ENCODE measurements at regions of chr7 and their contacts with region 1.

Region 1: DNA sequence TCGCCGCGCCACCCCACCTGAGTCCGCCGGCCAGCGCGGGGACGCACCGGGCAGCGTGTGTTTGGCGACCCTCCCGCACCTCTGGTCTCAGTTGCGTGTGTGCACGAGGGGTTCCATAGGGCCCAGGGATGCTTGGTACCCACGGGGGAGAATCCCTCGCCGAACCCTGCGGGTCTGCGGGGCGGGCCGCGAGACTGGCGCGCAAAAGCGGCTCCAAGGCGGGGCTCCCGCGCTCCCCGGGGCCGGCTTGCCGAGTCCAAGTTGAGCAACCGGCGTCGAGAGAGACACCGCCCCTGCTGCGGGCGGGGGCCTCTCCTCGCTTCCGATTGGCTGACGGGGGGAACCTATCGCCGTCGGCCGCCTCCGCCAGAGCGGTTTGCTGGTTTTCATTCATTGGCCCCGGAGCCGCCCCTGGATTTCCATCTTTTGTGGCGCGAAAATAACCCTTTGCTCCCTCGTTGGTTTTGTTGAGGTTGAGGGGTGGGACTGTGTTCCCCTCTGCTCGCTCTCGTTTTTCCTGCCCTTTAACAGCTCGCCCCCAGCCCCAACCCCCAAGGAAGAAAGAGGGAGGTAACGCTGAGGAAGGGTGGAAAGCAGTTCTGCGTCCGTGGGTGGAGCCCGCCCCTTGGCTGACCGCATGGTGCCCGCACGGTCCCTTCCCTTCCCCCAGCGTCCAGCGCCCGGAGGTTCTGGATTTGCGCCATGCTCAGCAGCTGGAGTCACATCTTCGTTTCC is 4.0 kb upstream of the IGF2BP3 start:
- DNase-seq: peak; percentile 96 to 99
- H3K4me3 ChIP-seq: peak overlapping the region; percentile 73
- H3K27ac ChIP-seq: peak overlapping the region; percentile 92
- H3K4me1 ChIP-seq: peaks cover 39% of the 10 kb centered on the region
- H3K27me3 ChIP-seq: no peaks in the 10 kb centered on the region
- CTCF ChIP-seq: no peak

Region 2: GRCh38 chr7:22822486-22823141 is 651.6 kb before region 1 on chr7 and contains the start of gene TOMM7:
- CTCF ChIA-PET with region 1: no interaction called
- POLR2A ChIA-PET with region 1: no interaction called
- intact Hi-C with region 1: loop called (anchors 10 kb)
- DNase-seq: peak; percentile 90 to 94
- H3K4me3 ChIP-seq: peak within 1 kb of the TSS; percentile 99
- H3K27ac ChIP-seq: peak within 1 kb of the TSS; percentile 33
- H3K4me1 ChIP-seq: peaks cover 29% of the 10 kb centered on the region
- H3K27me3 ChIP-seq: no peaks in the 10 kb centered on the region
- CTCF ChIP-seq: peak; percentile 65
- total RNA-seq, gene TOMM7: 588 and 703 TPM in 2 replicates

Region 3: GRCh38 chr7:23117841-23118240 is 356.4 kb before region 1 on chr7:
- CTCF ChIA-PET with region 1: no interaction called
- POLR2A ChIA-PET with region 1: no interaction called
- intact Hi-C with region 1: no loop called
- DNase-seq: no peak
- H3K4me3 ChIP-seq: no peak overlapping the region
- H3K27ac ChIP-seq: no peak overlapping the region
- H3K4me1 ChIP-seq: no peaks in the 10 kb centered on the region
- H3K27me3 ChIP-seq: no peaks in the 10 kb centered on the region
- CTCF ChIP-seq: no peak

Region 4: GRCh38 chr7:23298885-23299769 is 175.1 kb before region 1 on chr7 and contains the start of gene MALSU1:
- CTCF ChIA-PET with region 1: no interaction called
- POLR2A ChIA-PET with region 1: interaction called, 3 read pairs
- intact Hi-C with region 1: loop called (anchors 1 kb)
- DNase-seq: peak; percentile 95 to 97
- H3K4me3 ChIP-seq: peak within 1 kb of the TSS; percentile 71
- H3K27ac ChIP-seq: peak within 1 kb of the TSS; percentile 85
- H3K4me1 ChIP-seq: peaks cover 27% of the 10 kb centered on the region
- H3K27me3 ChIP-seq: no peaks in the 10 kb centered on the region
- CTCF ChIP-seq: no peak
- total RNA-seq, gene MALSU1: 105 and 133 TPM in 2 replicates

Region 5: DNA sequence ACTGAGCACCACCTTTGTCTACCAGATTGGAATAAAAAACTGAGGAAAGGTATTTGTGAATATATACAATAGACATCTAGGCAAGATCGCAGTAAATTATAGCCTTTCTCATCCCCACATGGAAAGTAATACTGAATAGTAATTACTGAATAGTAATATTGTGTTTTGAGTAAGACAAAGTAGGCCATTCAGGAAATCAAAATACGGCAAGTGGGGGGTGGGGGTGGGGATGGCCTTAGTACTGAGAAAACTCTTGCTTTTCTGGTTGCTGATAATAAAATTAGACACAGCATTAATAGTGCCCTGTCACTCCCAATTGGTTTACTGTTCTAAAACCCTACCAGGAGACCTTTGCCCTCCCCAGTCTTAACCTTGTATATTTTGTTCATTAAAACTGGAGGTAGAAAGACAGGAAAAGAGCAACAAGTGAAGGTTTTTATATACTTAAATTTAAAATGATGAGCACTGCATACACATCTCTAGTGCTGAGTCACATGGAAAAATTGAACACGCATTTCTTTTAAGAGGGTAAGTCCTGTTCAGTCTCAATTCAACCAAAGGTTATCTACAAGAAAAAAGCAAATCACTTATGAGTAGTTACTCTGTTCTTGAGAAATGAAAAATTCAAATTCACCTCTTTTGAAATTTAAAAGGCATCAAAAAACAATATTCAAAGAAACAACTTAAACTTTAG is 69.6 kb before region 1 on chr7:
- CTCF ChIA-PET with region 1: no interaction called
- POLR2A ChIA-PET with region 1: no interaction called
- intact Hi-C with region 1: loop called (anchors 5 kb)
- DNase-seq: peak in 1 of 2 experiments; percentile 33
- H3K4me3 ChIP-seq: no peak overlapping the region
- H3K27ac ChIP-seq: peak overlapping the region; percentile 10; the same call in 1 of the 2 replicates
- H3K4me1 ChIP-seq: peaks cover 29% of the 10 kb centered on the region
- H3K27me3 ChIP-seq: no peaks in the 10 kb centered on the region
- CTCF ChIP-seq: no peak

Region 6: DNA sequence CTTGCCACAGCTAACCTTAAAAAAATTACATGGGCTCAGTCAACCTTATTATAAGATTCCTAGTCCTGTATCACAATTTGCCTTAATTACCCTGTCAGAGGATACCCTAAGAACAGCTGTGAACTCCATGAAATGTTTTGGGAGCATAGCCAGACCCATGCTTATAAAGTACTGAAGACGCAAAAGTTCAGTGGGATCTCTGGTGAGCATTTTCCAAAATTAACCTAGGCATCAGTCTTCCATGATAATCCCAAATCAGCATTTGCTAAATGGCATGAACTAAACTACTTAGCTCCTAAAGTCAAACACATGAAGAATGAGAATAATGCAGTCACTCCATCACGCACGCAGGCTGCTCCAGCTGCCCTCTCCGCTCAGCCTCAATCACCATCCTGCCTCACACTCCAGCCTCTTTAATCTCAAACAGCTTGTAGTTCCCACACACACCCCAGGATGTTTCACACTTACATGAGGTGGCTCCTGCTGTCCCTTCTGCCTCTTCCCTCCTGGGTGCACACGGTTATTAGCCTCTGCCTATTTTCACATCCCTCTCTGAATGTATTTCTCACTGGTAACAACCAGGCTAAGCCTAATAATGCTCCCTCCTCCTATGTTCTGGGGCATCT is 19.3 kb before region 1 on chr7:
- CTCF ChIA-PET with region 1: no interaction called
- POLR2A ChIA-PET with region 1: no interaction called
- intact Hi-C with region 1: no loop called
- DNase-seq: no peak
- H3K4me3 ChIP-seq: no peak overlapping the region
- H3K27ac ChIP-seq: no peak overlapping the region
- H3K4me1 ChIP-seq: no peaks in the 10 kb centered on the region; the same call in 1 of the 2 replicates
- H3K27me3 ChIP-seq: no peaks in the 10 kb centered on the region
- CTCF ChIP-seq: no peak

Region 7: GRCh38 chr7:23531794-23532489 is 57.7 kb after region 1 on chr7 and contains the start of gene TRA2A:
- CTCF ChIA-PET with region 1: no interaction called
- POLR2A ChIA-PET with region 1: interaction called, 5 read pairs
- intact Hi-C with region 1: loop called (anchors 1 kb)
- DNase-seq: peak; percentile 91 to 98
- H3K4me3 ChIP-seq: peak within 1 kb of the TSS; percentile 89
- H3K27ac ChIP-seq: peak within 1 kb of the TSS; percentile 89
- H3K4me1 ChIP-seq: peaks cover 36% of the 10 kb centered on the region
- H3K27me3 ChIP-seq: no peaks in the 10 kb centered on the region
- CTCF ChIP-seq: no peak
- total RNA-seq, gene TRA2A: 77.0 and 112 TPM in 2 replicates

Measured in PC-9 (cell line).